Activated CD8-positive, alpha-beta memory T cell treated with anti-CD3 and anti-CD28 coated beads, Interleukin-2, amount 10 ng/mL, durations not matched to agents 7 days and 5 days (primary cell): ENCODE measurements at regions of chr22 and their contacts with region 1.

Region 1: GRCh38 chr22:41940832-41941765 is 5.9 kb downstream of the CENPM start:
- DNase-seq: peak; percentile 93
- ATAC-seq: peak; percentile 62
- H3K4me3 Mint-ChIP-seq: peak overlapping the region; percentile 34
- H3K27ac Mint-ChIP-seq: peak overlapping the region; percentile 98
- H3K4me1 Mint-ChIP-seq: peaks cover 63% of the 10 kb centered on the region
- H3K27me3 Mint-ChIP-seq: no peaks in the 10 kb centered on the region

Region 2: GRCh38 chr22:41697126-41697775 is 243.8 kb before region 1 on chr22:
- CTCF ChIA-PET with region 1: interaction called, 62 read pairs
- DNase-seq: peak; percentile 92
- ATAC-seq: peak; percentile 82
- H3K4me3 Mint-ChIP-seq: no peak overlapping the region
- H3K27ac Mint-ChIP-seq: peak overlapping the region; percentile 79
- H3K4me1 Mint-ChIP-seq: peaks cover 9% of the 10 kb centered on the region
- H3K27me3 Mint-ChIP-seq: peaks cover 5% of the 10 kb centered on the region

Region 3: DNA sequence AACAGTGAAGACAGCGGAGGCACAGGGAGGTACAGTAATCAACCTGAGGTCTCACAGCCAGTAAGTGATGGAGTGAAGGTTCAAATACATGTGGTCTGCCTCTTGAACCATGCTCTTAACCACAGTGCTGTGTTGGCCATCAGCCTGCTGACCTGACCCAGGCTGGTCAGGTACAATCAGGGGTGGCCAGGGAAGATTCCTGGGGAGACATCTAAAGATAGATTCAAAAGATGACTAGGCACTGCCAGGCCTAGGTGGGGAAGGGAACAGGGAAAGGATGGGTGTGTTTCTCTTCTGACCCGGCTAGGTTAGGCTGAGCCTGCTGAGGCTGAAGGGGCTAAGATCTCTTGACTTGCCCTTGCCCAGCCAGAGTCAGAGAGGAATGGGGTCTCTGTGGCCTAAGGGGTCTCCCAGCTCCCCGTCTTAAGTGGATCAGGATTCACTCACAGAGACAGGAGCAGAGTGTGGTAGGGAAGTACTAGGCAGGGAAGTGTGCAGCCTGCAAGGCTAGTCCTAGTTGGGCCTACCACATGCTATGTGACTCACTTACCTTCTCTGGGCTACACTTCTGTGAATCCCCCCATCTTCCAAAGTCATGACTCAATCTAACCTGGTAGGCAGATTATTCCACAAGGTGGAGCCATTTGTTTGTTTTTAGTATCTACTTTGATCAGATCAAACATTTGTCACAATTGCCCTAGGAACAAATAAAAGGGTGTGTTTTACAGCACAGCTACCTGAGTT is 118.6 kb before region 1 on chr22:
- CTCF ChIA-PET with region 1: interaction called, 13 read pairs
- DNase-seq: peak; percentile 54
- ATAC-seq: peak; percentile 84
- H3K4me3 Mint-ChIP-seq: no peak overlapping the region
- H3K27ac Mint-ChIP-seq: peak overlapping the region; percentile 73
- H3K4me1 Mint-ChIP-seq: peaks cover 23% of the 10 kb centered on the region
- H3K27me3 Mint-ChIP-seq: no peaks in the 10 kb centered on the region

Region 4: DNA sequence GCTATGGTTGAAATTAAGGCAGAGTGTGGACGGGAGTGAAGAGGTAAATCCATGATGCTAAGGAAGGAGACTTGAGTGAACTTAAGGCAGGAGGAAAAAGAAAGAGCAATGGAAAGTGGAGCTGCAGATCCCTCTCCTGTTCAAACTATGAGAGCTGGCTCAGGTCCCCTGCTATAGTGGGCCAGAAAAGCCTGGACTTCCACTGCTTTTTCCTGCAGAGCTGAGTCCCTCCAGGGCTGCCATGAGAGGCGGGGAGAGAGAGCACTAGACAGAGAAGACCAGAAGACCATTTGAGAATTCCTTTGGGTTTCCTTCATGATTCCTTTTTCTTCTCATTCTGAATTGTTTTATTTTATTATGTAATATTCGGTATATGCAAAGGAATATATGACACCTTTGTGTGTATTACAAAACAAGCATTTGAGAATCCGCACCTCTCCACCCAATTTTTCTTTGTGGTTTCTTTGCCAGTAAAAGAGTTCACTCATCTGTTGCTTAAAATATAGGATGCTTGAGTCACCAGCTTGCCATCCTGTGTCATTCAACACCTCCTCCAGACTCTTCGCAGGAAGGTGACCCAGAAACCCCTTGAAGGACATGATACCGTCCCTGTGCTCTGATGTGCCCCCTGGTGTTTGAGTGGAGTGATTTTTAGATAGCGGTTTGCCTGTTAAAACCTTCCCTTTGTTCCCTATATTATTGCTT is 83.8 kb before region 1 on chr22:
- CTCF ChIA-PET with region 1: interaction called, 14 read pairs
- DNase-seq: peak; percentile 85
- ATAC-seq: peak; percentile 73
- H3K4me3 Mint-ChIP-seq: no peak overlapping the region
- H3K27ac Mint-ChIP-seq: peak overlapping the region; percentile 79
- H3K4me1 Mint-ChIP-seq: peaks cover 67% of the 10 kb centered on the region
- H3K27me3 Mint-ChIP-seq: no peaks in the 10 kb centered on the region

Region 5: DNA sequence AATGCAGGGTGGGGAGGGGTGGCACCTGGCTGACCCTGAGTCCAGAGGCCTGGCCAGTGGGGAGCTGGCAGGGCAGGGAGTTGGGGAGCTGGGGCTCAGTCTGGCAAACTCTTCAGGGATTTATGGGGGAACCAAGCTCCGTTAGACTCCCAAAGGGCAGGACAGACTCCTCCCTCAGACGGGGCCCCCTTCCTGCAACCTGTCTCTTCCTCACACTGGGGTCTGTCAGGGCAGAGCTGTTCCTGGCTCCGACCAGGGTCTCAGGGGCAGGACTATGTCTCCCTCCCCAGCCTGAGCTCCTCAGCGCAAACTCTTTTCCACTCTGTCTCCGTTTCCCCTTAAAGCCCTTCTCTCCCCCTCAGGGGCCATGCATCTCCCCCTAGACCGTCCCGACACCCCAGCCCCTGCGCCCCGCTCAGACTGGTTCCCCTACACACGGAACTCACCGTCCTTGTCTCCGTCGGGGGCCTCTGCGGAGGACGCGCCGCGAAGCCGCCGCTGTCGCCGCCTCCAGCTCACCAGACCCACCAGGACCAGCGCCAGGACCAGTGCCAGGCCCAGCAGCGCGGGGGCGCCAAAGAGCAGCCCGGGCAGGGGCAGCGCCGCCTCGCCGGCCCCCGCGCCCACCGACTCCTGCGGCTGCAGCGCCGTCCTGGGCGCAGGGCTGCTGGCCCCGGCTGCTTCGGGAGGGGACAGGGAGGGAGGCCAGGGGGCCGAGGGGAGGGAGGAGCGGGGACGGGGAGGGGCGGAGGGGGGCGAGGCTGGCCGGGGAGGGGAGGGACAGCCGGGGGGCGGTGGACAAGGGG is 15.2 kb before region 1 on chr22:
- CTCF ChIA-PET with region 1: interaction called, 52 read pairs
- DNase-seq: peak; percentile 82
- ATAC-seq: peak; percentile 89
- H3K4me3 Mint-ChIP-seq: peak overlapping the region; percentile 57
- H3K27ac Mint-ChIP-seq: no peak overlapping the region
- H3K4me1 Mint-ChIP-seq: peaks cover 7% of the 10 kb centered on the region
- H3K27me3 Mint-ChIP-seq: peaks cover 16% of the 10 kb centered on the region